GM12878 (cell line): ENCODE measurements at regions of chrX and their contacts with region 1.

Region 1: GRCh38 chrX:38879631-38880220 is 78.5 kb downstream of the MID1IP1 start:
- DNase-seq: no peak
- ATAC-seq: peak; percentile 72
- H3K4me3 ChIP-seq: no peak overlapping the region
- H3K27ac ChIP-seq: peak overlapping the region; percentile 68
- H3K4me1 ChIP-seq: peaks cover 14% of the 10 kb centered on the region
- H3K27me3 ChIP-seq: no peaks in the 10 kb centered on the region
- CTCF ChIP-seq: no peak
- EP300 ChIP-seq: no peak; a peak in 1 of 4 replicates
- POLR2A ChIP-seq: no peak
- RAD21 ChIP-seq: no peak

Region 2: DNA sequence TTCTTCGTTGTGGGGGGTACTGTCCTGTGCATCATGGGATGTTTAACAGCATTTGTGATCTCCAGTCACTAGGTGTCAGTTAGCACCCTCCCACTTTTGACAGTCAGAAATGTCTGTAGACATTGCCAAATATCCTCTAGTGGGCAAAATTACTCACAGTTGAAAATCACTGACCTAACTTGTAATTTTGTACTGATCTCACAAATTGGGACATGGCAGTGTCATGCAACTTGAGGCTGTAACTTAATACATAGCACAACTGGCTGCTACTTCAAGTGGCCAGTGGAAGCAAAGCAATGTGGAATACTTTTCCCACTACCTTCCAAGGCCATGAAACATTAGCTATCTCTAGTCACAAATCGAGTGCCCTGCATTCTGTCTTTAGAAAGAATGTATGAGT is 341.6 kb before region 1 on chrX:
- CTCF ChIA-PET with region 1: no interaction called
- POLR2A ChIA-PET with region 1: no interaction called
- RAD21 ChIA-PET with region 1: no interaction called
- SMC1A ChIA-PET with region 1: no interaction called
- in situ Hi-C with region 1: no loop called
- intact Hi-C with region 1: no loop called
- DNase-seq: no peak
- ATAC-seq: no peak
- H3K4me3 ChIP-seq: no peak overlapping the region
- H3K27ac ChIP-seq: no peak overlapping the region
- H3K4me1 ChIP-seq: no peaks in the 10 kb centered on the region
- H3K27me3 ChIP-seq: no peaks in the 10 kb centered on the region
- CTCF ChIP-seq: no peak
- EP300 ChIP-seq: no peak
- POLR2A ChIP-seq: no peak
- RAD21 ChIP-seq: no peak

Region 3: GRCh38 chrX:38811515-38812243 is 68.0 kb before region 1 on chrX:
- CTCF ChIA-PET with region 1: interaction called, 10 read pairs
- POLR2A ChIA-PET with region 1: interaction called, 12 read pairs
- RAD21 ChIA-PET with region 1: interaction called, 16 read pairs
- SMC1A ChIA-PET with region 1: interaction called, 39 read pairs
- in situ Hi-C with region 1: no loop called
- intact Hi-C with region 1: no loop called
- DNase-seq: no peak
- ATAC-seq: peak; percentile 71
- H3K4me3 ChIP-seq: no peak overlapping the region
- H3K27ac ChIP-seq: no peak overlapping the region; the same call in 1 of the 2 replicates
- H3K4me1 ChIP-seq: no peaks in the 10 kb centered on the region
- H3K27me3 ChIP-seq: no peaks in the 10 kb centered on the region
- CTCF ChIP-seq: no peak
- EP300 ChIP-seq: no peak
- POLR2A ChIP-seq: no peak
- RAD21 ChIP-seq: no peak

Region 4: GRCh38 chrX:38891641-38892413 is 12.1 kb after region 1 on chrX:
- CTCF ChIA-PET with region 1: interaction called, 12 read pairs
- POLR2A ChIA-PET with region 1: interaction called, 7 read pairs
- RAD21 ChIA-PET with region 1: interaction called, 11 read pairs
- SMC1A ChIA-PET with region 1: interaction called, 21 read pairs
- in situ Hi-C with region 1: no loop called
- intact Hi-C with region 1: no loop called
- DNase-seq: no peak
- ATAC-seq: peak; percentile 99
- H3K4me3 ChIP-seq: no peak overlapping the region
- H3K27ac ChIP-seq: no peak overlapping the region
- H3K4me1 ChIP-seq: no peaks in the 10 kb centered on the region; the same call in 1 of the 2 replicates
- H3K27me3 ChIP-seq: no peaks in the 10 kb centered on the region
- CTCF ChIP-seq: no peak
- EP300 ChIP-seq: no peak
- POLR2A ChIP-seq: no peak
- RAD21 ChIP-seq: no peak

Region 5: GRCh38 chrX:38923451-38923969 is 43.8 kb after region 1 on chrX:
- CTCF ChIA-PET with region 1: no interaction called
- POLR2A ChIA-PET with region 1: interaction called, 3 read pairs
- RAD21 ChIA-PET with region 1: interaction called, 7 read pairs
- SMC1A ChIA-PET with region 1: interaction called, 14 read pairs
- in situ Hi-C with region 1: no loop called
- intact Hi-C with region 1: loop called (anchors 1 kb)
- DNase-seq: peak; percentile 79
- ATAC-seq: peak; percentile 86
- H3K4me3 ChIP-seq: no peak overlapping the region
- H3K27ac ChIP-seq: no peak overlapping the region
- H3K4me1 ChIP-seq: no peaks in the 10 kb centered on the region; the same call in 1 of the 2 replicates
- H3K27me3 ChIP-seq: no peaks in the 10 kb centered on the region
- CTCF ChIP-seq: no peak
- EP300 ChIP-seq: 0 out of 4 replicates have a peak, but pooled peaks have one; percentile 19 to 34
- POLR2A ChIP-seq: no peak
- RAD21 ChIP-seq: no peak